Ascending aorta (tissue), 2 donors: ENCODE measurements at regions of chr19 and their contacts with region 1.

Region 1: DNA sequence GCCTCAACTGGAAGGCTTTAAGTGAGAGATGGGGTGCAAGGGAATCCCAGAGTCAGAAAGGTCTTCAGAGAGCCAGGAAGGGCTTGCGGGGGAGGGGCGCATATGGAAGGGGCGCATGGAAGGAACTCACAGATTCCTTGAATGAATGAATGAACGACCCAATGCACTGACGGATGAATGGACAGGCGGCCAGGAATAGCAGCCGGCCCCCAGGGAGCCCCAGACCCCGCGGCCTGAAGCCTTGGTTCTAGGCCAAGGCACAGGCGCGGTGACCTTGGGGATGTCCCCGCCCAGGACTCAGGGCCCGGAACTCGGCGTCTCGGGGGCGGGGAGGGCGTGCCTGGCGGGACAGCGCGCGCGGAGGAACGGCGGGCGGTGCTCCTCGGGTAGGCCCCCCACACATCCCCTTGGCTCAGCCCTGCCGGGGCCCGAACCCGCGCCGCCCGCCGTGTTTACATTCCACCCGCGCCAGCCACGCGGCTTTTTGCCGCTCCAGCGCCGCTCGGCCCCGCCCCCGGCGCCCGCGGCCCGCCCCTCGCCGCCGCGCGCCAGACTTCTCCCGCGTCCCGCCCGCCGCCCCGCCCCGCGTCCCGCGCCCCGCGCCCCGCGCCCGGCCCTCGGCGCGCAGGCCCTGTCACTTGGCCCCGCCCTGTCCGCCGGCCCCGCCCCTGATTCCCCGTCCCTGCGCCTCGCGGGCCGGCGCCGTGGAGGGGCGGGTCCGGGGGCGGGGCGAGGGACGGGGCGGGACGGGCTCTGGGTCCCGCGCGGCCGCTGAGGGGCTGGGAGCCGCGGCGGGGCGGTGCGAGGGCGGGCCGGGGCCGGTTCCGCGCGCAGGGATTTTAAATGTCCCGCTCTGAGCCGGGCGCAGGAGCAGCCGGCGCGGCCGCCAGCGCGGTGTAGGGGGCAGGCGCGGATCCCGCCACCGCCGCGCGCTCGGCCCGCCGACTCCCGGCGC is at the start of gene CCNE1:
- DNase-seq: peak; percentile 55 to 95
- H3K4me3 ChIP-seq: peak within 1 kb of the TSS; percentile 75 to 79
- H3K27ac ChIP-seq: no peak within 1 kb of the TSS
- H3K4me1 ChIP-seq: no peaks in the 10 kb centered on the region
- H3K27me3 ChIP-seq: no peaks in the 10 kb centered on the region
- CTCF ChIP-seq: no peak
- total RNA-seq, gene CCNE1: not detected

Region 2: DNA sequence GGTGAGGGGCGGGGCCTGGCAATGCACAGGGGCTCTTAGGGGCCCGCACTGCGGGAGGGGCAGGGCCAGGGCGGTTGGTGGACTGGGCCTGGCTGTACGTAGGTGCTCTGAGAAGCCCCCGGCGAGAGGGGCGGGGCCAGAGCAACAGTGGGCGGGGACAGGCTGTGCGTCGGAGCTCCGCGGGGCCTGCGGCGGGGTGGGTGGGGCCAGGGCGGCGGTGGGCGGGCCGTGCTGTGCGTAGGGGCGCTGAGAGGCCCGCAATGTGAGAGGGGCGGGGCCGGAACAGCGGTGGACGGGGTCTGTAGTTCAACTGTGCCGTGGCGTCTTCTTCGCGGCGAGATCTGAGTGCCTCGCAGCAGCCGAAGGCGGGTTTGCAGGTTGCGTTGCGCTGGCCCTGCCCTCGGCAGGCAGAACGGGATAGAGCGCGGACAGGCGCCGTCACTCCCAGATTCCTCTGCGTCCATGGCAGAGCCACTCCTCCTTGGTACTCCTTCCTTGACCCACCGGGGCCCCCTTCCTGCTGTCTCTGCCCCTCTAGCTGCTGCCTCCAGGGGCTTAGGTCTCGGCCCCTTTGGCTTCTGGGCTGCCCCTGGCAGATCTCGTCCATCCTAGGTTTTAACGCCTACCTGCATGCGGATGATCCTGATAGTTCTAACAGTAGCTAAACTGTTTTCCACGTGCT is 33.6 kb after region 1 on chr19:
- intact Hi-C with region 1: loop called (anchors 1 kb)
- DNase-seq: peak; percentile 55 to 92
- H3K4me3 ChIP-seq: peak overlapping the region; percentile 66 to 88
- H3K27ac ChIP-seq: peak overlapping the region; percentile 27 to 74
- H3K4me1 ChIP-seq: peaks cover 5 to 9% of the 10 kb centered on the region in 2 donors
- H3K27me3 ChIP-seq: no peaks in the 10 kb centered on the region
- CTCF ChIP-seq: no peak